ENCODE measurements at regions of chr20 and their contacts with region 1.

Region 1: GRCh38 chr20:50987592-50988210 is 29.1 kb downstream of the MOCS3 start:
- DNase-seq: peak; percentile 23 to 77 (median 66)
- ATAC-seq: peak; percentile 92
- H3K4me3 ChIP-seq: no peak overlapping the region
- H3K4me3 Mint-ChIP-seq: no peak overlapping the region
- H3K27ac ChIP-seq: no peak overlapping the region
- H3K27ac Mint-ChIP-seq: peak overlapping the region in 1 of 9 donors; percentile 43
- H3K4me1 ChIP-seq: no peaks in the 10 kb centered on the region
- H3K4me1 Mint-ChIP-seq: peaks cover 0 to 6% (median 0%) of the 10 kb centered on the region in 7 donors
- H3K27me3 ChIP-seq: peaks cover 0 to 3% of the 10 kb centered on the region in 2 donors
- H3K27me3 Mint-ChIP-seq: peaks cover 18 to 31% (median 25%) of the 10 kb centered on the region in 5 donors

Region 2: DNA sequence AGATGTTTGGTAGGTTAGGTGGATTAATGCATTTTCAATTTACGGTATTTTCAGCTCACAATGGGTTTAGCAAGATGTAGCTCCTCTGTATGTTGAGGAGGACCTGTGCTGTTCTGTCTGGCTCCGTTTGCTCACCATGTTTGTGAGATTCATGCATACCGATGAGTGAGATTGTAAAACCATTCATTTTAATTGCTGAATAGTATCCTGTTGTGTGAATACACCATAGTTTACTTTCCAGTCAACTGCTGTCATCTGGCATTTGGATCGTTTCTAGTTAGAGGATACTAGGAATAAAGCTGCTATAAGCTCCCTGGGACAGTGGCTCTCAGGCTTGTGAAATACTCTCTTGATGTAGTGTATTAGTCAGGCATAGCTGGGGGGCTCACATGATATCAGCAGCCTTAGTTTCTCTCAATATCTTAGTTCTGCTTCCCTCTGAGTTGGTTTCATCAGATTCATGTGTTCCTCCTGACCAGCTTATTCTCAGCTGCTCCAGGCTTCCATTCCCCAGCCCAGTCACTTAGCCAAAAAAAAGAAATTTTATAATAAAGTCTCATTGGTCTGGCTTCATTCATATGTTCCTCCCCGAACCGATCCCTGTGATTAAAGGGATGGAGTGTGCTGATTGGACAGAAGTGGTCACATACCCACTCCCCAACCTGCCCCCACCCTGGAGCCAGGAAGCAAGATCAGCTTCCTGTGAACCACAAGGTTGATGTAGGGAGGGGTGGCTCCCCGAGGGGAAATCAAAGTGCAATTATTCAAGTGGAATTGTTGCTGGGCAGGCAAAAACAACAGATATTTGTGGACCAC is 1263.1 kb before region 1 on chr20:
- CTCF ChIA-PET with region 1: no interaction called
- POLR2A ChIA-PET with region 1: no interaction called
- intact Hi-C with region 1: no loop called
- DNase-seq: peak in 1 of 9 donors; percentile 11
- ATAC-seq: peak; percentile 77
- H3K4me3 ChIP-seq: no peak overlapping the region
- H3K4me3 Mint-ChIP-seq: peak overlapping the region in 2 of 10 donors; percentile 4 to 35
- H3K27ac ChIP-seq: no peak overlapping the region
- H3K27ac Mint-ChIP-seq: no peak overlapping the region
- H3K4me1 ChIP-seq: peaks cover 0 to 6% of the 10 kb centered on the region in 2 donors
- H3K4me1 Mint-ChIP-seq: peaks cover 8 to 18% (median 15%) of the 10 kb centered on the region in 7 donors
- H3K27me3 ChIP-seq: no peaks in the 10 kb centered on the region
- H3K27me3 Mint-ChIP-seq: peaks cover 0 to 7% (median 0%) of the 10 kb centered on the region in 5 donors

Region 3: GRCh38 chr20:51059862-51060261 is 72.2 kb after region 1 on chr20:
- CTCF ChIA-PET with region 1: no interaction called
- POLR2A ChIA-PET with region 1: no interaction called
- intact Hi-C with region 1: no loop called
- DNase-seq: no peak
- ATAC-seq: no peak
- H3K4me3 ChIP-seq: no peak overlapping the region
- H3K4me3 Mint-ChIP-seq: no peak overlapping the region
- H3K27ac ChIP-seq: no peak overlapping the region
- H3K27ac Mint-ChIP-seq: no peak overlapping the region
- H3K4me1 ChIP-seq: no peaks in the 10 kb centered on the region
- H3K4me1 Mint-ChIP-seq: peaks cover 0 to 6% (median 0%) of the 10 kb centered on the region in 7 donors
- H3K27me3 ChIP-seq: no peaks in the 10 kb centered on the region
- H3K27me3 Mint-ChIP-seq: peaks cover 2 to 58% (median 26%) of the 10 kb centered on the region in 5 donors

Region 4: DNA sequence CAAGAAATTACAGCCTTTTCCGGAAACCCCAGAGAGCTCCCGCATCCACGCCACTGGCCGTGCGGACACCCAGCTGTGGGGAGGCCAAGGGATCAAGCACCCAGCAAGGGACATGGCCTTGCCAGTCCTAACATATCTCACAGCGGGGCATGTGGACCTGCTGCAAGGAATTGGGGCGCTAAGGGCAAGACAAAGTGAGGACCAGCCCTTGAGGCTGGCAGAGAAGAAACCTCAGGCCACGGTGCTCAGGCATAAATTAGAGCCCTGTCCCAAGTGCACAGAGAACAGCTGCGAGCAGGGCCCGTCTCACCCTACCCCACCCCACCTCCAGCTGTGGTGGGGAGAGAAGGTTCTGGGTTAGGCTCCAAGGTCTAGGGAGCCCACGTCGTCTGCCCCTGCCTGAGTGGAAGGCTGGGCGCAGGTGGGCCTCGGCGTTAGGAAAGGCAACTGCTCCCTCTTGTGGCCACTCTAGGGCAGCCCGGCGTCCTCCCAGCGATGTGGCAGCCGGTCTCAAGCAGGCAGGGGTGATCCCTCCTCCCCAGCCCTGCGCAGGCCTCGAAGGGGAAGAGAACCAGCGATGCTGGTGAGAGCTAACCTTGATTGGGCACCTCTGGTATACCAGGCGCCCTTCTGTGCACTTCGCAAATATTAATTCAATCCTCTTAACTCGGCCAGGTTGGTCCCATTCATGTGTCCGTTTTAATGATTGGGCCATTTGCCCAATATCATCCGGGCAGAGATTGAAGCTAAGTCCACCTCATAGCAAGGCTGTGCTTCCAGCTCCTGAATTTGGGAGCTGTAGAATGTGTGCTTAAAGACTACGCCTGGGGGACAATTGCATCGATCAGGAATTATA is 319.0 kb after region 1 on chr20:
- CTCF ChIA-PET with region 1: interaction called, 8 read pairs
- POLR2A ChIA-PET with region 1: no interaction called
- intact Hi-C with region 1: loop called (anchors 1 kb)
- DNase-seq: peak; percentile 39 to 74 (median 53)
- ATAC-seq: peak; percentile 87
- H3K4me3 ChIP-seq: no peak overlapping the region
- H3K4me3 Mint-ChIP-seq: no peak overlapping the region
- H3K27ac ChIP-seq: no peak overlapping the region
- H3K27ac Mint-ChIP-seq: no peak overlapping the region
- H3K4me1 ChIP-seq: peaks cover 0 to 4% of the 10 kb centered on the region in 2 donors
- H3K4me1 Mint-ChIP-seq: peaks cover 0 to 5% (median 0%) of the 10 kb centered on the region in 7 donors
- H3K27me3 ChIP-seq: no peaks in the 10 kb centered on the region
- H3K27me3 Mint-ChIP-seq: peaks cover 8 to 25% (median 21%) of the 10 kb centered on the region in 5 donors

Region 5: GRCh38 chr20:51326201-51326819 is 338.6 kb after region 1 on chr20:
- CTCF ChIA-PET with region 1: interaction called, 13 read pairs
- POLR2A ChIA-PET with region 1: no interaction called
- intact Hi-C with region 1: loop called in 1 of 2 experiments (anchors 1 kb)
- DNase-seq: peak in 2 of 9 donors; percentile 16 to 27
- ATAC-seq: peak; percentile 69
- H3K4me3 ChIP-seq: no peak overlapping the region
- H3K4me3 Mint-ChIP-seq: no peak overlapping the region
- H3K27ac ChIP-seq: no peak overlapping the region
- H3K27ac Mint-ChIP-seq: no peak overlapping the region
- H3K4me1 ChIP-seq: no peaks in the 10 kb centered on the region
- H3K4me1 Mint-ChIP-seq: peaks cover 0 to 4% (median 0%) of the 10 kb centered on the region in 7 donors
- H3K27me3 ChIP-seq: no peaks in the 10 kb centered on the region
- H3K27me3 Mint-ChIP-seq: peaks cover 0 to 10% (median 7%) of the 10 kb centered on the region in 5 donors

Region 6: GRCh38 chr20:51428401-51429143 is 440.9 kb after region 1 on chr20:
- CTCF ChIA-PET with region 1: no interaction called
- POLR2A ChIA-PET with region 1: no interaction called
- intact Hi-C with region 1: no loop called
- DNase-seq: no peak
- ATAC-seq: no peak
- H3K4me3 ChIP-seq: no peak overlapping the region
- H3K4me3 Mint-ChIP-seq: no peak overlapping the region
- H3K27ac ChIP-seq: no peak overlapping the region
- H3K27ac Mint-ChIP-seq: peak overlapping the region in 3 of 9 donors; percentile 4 to 26 (median 17)
- H3K4me1 ChIP-seq: peaks cover 7 to 71% of the 10 kb centered on the region in 2 donors
- H3K4me1 Mint-ChIP-seq: peaks cover 33 to 67% (median 41%) of the 10 kb centered on the region in 7 donors
- H3K27me3 ChIP-seq: no peaks in the 10 kb centered on the region
- H3K27me3 Mint-ChIP-seq: no peaks in the 10 kb centered on the region